Naive thymus-derived CD4-positive, alpha-beta T cell (primary cell): ENCODE measurements at regions of chr16 and their contacts with region 1.

Region 1: DNA sequence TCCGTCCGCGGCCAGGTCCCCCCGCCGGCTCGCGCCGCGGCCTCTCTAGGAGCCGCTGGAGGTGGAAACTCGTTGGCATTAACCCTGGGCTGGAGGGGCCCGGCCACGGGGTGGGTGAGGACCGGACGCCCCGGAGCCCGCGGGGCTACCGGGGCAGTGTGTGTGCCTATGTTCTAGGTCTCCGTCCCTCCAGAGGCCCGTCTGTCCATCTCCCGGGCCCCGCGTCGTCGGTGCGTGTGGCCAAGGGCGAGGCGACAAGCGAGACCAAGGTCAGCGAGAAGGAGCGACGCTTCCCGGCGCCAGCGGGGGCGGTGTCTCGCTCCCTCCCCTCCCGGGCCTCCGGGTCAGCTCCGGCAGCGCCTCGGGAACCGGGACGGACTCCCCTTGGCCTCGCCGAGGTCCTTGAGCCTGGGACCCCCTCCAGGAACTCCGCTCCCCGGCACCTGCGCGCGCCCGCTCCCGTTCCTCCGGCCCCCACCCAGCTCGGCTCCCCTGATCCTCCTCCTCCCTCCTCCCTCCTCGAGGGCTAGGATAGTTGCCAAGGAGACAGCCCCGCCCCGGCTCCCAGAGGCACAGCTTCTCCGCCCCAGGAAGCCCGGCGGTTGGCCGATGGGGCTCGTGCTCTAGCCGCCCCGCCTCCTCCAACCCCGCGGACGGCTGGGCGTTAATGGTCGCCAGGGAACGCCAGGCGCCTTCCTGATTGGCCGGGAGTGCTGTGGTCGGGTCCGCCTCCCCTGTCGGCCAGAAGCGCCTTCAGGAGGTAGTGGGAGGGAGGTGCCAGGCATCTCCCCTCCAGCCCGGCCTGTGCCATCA is 663 bp upstream of the ZNF768 start:
- DNase-seq: peak; percentile 59 to 95 (median 64)
- ATAC-seq: peak; percentile 87
- H3K4me3 ChIP-seq: peak overlapping the region; percentile 75
- H3K4me3 Mint-ChIP-seq: peak overlapping the region; percentile 78 to 92 (median 88)
- H3K27ac ChIP-seq: peak overlapping the region; percentile 76
- H3K27ac Mint-ChIP-seq: peak overlapping the region; percentile 82 to 94 (median 88)
- H3K4me1 ChIP-seq: peaks cover 0 to 10% of the 10 kb centered on the region in 2 donors
- H3K4me1 Mint-ChIP-seq: peaks cover 16 to 39% (median 32%) of the 10 kb centered on the region in 7 donors
- H3K27me3 ChIP-seq: no peaks in the 10 kb centered on the region
- H3K27me3 Mint-ChIP-seq: no peaks in the 10 kb centered on the region

Region 2: GRCh38 chr16:30370444-30371247 is 156.4 kb before region 1 on chr16 and contains the start of gene TBC1D10B:
- CTCF ChIA-PET with region 1: no interaction called
- POLR2A ChIA-PET with region 1: interaction called, 3 read pairs
- intact Hi-C with region 1: loop called in 1 of 2 experiments (anchors 2 kb)
- DNase-seq: peak; percentile 89 to 100 (median 100)
- ATAC-seq: peak; percentile 91
- H3K4me3 ChIP-seq: peak within 1 kb of the TSS; percentile 76
- H3K4me3 Mint-ChIP-seq: peak within 1 kb of the TSS; percentile 83 to 92 (median 89)
- H3K27ac ChIP-seq: peak within 1 kb of the TSS; percentile 80
- H3K27ac Mint-ChIP-seq: peak within 1 kb of the TSS; percentile 63 to 98 (median 93)
- H3K4me1 ChIP-seq: peaks cover 24 to 25% of the 10 kb centered on the region in 2 donors
- H3K4me1 Mint-ChIP-seq: peaks cover 42 to 54% (median 50%) of the 10 kb centered on the region in 7 donors
- H3K27me3 ChIP-seq: no peaks in the 10 kb centered on the region
- H3K27me3 Mint-ChIP-seq: peaks cover 0 to 3% (median 0%) of the 10 kb centered on the region in 5 donors
- total RNA-seq, gene TBC1D10B: 23.2 to 70.0 (median 45.2) TPM

Region 3: GRCh38 chr16:30378236-30379204 is 148.5 kb before region 1 on chr16:
- CTCF ChIA-PET with region 1: no interaction called
- POLR2A ChIA-PET with region 1: no interaction called
- intact Hi-C with region 1: loop called in 1 of 2 experiments (anchors 1 kb)
- DNase-seq: peak; percentile 97 to 99 (median 99)
- ATAC-seq: peak; percentile 91
- H3K4me3 ChIP-seq: peak overlapping the region; percentile 88
- H3K4me3 Mint-ChIP-seq: peak overlapping the region; percentile 90 to 100 (median 97)
- H3K27ac ChIP-seq: peak overlapping the region; percentile 100
- H3K27ac Mint-ChIP-seq: peak overlapping the region; percentile 98 to 100 (median 100)
- H3K4me1 ChIP-seq: peaks cover 54 to 56% of the 10 kb centered on the region in 2 donors
- H3K4me1 Mint-ChIP-seq: peaks cover 32 to 61% (median 49%) of the 10 kb centered on the region in 7 donors
- H3K27me3 ChIP-seq: no peaks in the 10 kb centered on the region
- H3K27me3 Mint-ChIP-seq: no peaks in the 10 kb centered on the region

Region 4: DNA sequence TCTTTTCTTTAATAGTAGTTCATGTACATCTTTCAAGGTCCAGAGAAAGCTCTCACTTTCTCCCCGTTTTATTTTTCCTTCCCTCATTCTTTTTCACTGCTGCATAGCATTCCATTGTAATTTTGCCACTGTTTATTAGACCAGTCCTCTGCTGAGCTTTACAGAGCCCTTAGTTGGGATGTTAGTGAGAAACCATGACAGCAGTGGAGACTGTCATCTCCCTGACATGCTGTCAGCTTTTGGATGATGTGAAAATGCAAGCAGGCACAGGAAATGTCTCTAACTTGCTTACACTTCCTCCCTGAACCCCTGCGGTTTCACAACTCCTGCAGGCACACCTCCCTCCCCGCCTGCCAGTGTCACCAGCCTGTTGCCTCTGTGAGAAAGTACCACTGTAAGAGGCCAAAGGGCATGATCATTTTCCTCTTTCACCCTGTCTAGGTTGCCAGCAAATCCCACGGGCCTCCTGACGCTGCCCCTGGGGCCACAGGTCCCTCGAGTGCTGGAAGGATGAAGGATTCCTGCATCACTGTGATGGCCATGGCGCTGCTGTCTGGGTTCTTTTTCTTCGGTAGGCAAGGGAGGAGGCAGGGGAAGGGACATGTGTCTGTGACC is 54.6 kb before region 1 on chr16 and contains the start of gene ITGAL:
- CTCF ChIA-PET with region 1: no interaction called
- POLR2A ChIA-PET with region 1: no interaction called
- intact Hi-C with region 1: loop called (anchors 2 kb)
- DNase-seq: peak; percentile 41 to 89 (median 84)
- ATAC-seq: peak; percentile 89
- H3K4me3 ChIP-seq: peak within 1 kb of the TSS; percentile 74
- H3K4me3 Mint-ChIP-seq: peak within 1 kb of the TSS; percentile 83 to 100 (median 98)
- H3K27ac ChIP-seq: peak within 1 kb of the TSS; percentile 84
- H3K27ac Mint-ChIP-seq: peak within 1 kb of the TSS; percentile 88 to 98 (median 96)
- H3K4me1 ChIP-seq: peaks cover 60 to 63% of the 10 kb centered on the region in 2 donors
- H3K4me1 Mint-ChIP-seq: peaks cover 43 to 83% (median 57%) of the 10 kb centered on the region in 7 donors
- H3K27me3 ChIP-seq: no peaks in the 10 kb centered on the region
- H3K27me3 Mint-ChIP-seq: no peaks in the 10 kb centered on the region
- total RNA-seq, gene ITGAL: 258 to 629 (median 436) TPM

Region 5: GRCh38 chr16:30571695-30572600 is 44.9 kb after region 1 on chr16 and contains the start of gene ZNF688:
- CTCF ChIA-PET with region 1: no interaction called
- POLR2A ChIA-PET with region 1: interaction called, 4 read pairs
- intact Hi-C with region 1: loop called (anchors 2 kb)
- DNase-seq: peak; percentile 74 to 99 (median 97)
- ATAC-seq: peak; percentile 89
- H3K4me3 ChIP-seq: peak within 1 kb of the TSS; percentile 88
- H3K4me3 Mint-ChIP-seq: peak within 1 kb of the TSS; percentile 87 to 98 (median 90)
- H3K27ac ChIP-seq: peak within 1 kb of the TSS; percentile 94
- H3K27ac Mint-ChIP-seq: peak within 1 kb of the TSS; percentile 92 to 98 (median 95)
- H3K4me1 ChIP-seq: peaks cover 36 to 38% of the 10 kb centered on the region in 2 donors
- H3K4me1 Mint-ChIP-seq: peaks cover 17 to 51% (median 39%) of the 10 kb centered on the region in 7 donors
- H3K27me3 ChIP-seq: no peaks in the 10 kb centered on the region
- H3K27me3 Mint-ChIP-seq: no peaks in the 10 kb centered on the region
- total RNA-seq, gene ZNF688: 8.8 to 24.3 (median 16.3) TPM

Region 6: DNA sequence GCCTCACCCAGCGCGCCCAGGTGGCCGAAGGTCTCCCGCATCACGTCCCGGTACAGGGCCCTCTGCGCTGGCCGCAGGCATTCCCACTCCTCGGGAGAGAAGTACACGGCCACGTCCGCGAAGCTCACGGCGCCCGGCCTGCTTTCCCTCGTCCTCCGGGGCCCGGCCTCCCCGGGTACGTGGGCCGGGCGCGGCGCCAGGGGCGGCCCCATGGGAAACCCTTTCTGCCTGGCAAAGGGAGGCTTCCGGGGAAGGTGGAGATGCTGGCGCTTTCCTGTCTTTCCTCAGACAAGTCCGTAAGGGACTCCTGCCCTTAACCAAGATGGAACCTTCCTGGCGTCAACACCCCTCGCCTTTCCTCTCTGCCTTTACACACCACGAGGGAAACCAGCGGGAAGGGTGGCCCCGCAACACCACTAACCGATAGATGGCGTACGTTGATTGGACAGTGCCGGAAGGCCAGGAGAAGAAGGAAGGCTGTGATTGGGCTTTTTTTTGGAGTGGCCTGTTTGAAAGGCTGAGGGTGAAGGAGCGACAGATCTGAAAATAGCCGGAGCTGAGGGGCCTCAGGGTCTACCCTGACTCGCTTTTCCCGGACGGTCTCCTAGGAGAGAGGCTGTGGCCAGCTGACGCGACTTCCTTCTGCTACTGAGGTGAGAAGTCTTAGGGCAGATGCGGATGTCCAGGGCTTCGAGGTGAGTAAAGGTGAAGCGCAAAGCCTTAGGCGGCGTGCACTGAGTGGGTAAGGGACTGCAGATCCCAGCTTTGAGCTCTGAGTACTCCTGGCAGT is 58.6 kb after region 1 on chr16 and contains the start of gene ZNF785:
- CTCF ChIA-PET with region 1: no interaction called
- POLR2A ChIA-PET with region 1: no interaction called
- intact Hi-C with region 1: loop called (anchors 2 kb)
- DNase-seq: peak; percentile 72 to 95 (median 93)
- ATAC-seq: peak; percentile 100
- H3K4me3 ChIP-seq: peak within 1 kb of the TSS; percentile 77
- H3K4me3 Mint-ChIP-seq: peak within 1 kb of the TSS; percentile 85 to 98 (median 94)
- H3K27ac ChIP-seq: peak within 1 kb of the TSS; percentile 81
- H3K27ac Mint-ChIP-seq: peak within 1 kb of the TSS; percentile 89 to 95 (median 92)
- H3K4me1 ChIP-seq: peaks cover 8 to 12% of the 10 kb centered on the region in 2 donors
- H3K4me1 Mint-ChIP-seq: peaks cover 6 to 44% (median 32%) of the 10 kb centered on the region in 7 donors
- H3K27me3 ChIP-seq: no peaks in the 10 kb centered on the region
- H3K27me3 Mint-ChIP-seq: peaks cover 0 to 2% (median 0%) of the 10 kb centered on the region in 5 donors
- total RNA-seq, gene ZNF785: 10.2 to 37.1 (median 21.4) TPM

Region 7: DNA sequence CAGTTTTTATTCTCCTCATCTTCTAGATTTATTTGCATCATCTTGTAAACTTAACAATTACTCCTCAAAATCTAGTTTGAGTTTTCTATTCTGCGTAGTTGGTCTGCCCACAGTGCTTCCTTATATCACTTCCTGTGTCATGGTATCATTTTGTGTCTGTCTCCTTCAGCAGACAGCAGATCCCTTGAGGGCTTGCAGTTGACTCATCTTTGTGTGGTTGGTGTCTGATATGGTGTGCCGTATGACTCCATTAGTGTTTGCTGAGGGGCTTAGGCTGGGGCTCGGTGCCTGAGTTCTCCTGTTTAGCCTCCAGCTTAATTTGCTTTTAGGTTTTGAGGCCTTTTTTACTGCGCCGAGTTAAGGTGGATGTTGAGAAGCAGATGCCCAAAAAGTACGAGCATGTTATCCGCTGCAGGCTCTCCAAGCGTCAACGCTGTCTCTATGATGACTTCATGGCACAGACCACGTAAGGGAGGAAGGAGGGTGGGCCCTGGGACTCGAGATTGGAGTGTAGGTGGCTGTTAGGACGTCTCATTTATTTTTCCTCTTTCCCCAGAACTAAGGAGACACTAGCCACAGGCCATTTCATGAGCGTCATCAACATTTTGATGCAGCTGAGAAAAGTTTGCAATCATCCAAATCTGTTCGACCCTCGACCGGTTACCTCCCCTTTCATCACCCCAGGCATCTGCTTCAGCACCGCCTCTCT is 188.9 kb after region 1 on chr16:
- CTCF ChIA-PET with region 1: no interaction called
- POLR2A ChIA-PET with region 1: no interaction called
- intact Hi-C with region 1: no loop called
- DNase-seq: peak in 4 of 9 donors; percentile 12 to 57 (median 28)
- ATAC-seq: peak; percentile 93
- H3K4me3 ChIP-seq: no peak overlapping the region
- H3K4me3 Mint-ChIP-seq: peak overlapping the region; percentile 6 to 85 (median 58)
- H3K27ac ChIP-seq: peak overlapping the region; percentile 27
- H3K27ac Mint-ChIP-seq: peak overlapping the region; percentile 78 to 96 (median 91)
- H3K4me1 ChIP-seq: peaks cover 0 to 16% of the 10 kb centered on the region in 2 donors
- H3K4me1 Mint-ChIP-seq: peaks cover 20 to 39% (median 32%) of the 10 kb centered on the region in 7 donors
- H3K27me3 ChIP-seq: no peaks in the 10 kb centered on the region
- H3K27me3 Mint-ChIP-seq: no peaks in the 10 kb centered on the region

Region 8: DNA sequence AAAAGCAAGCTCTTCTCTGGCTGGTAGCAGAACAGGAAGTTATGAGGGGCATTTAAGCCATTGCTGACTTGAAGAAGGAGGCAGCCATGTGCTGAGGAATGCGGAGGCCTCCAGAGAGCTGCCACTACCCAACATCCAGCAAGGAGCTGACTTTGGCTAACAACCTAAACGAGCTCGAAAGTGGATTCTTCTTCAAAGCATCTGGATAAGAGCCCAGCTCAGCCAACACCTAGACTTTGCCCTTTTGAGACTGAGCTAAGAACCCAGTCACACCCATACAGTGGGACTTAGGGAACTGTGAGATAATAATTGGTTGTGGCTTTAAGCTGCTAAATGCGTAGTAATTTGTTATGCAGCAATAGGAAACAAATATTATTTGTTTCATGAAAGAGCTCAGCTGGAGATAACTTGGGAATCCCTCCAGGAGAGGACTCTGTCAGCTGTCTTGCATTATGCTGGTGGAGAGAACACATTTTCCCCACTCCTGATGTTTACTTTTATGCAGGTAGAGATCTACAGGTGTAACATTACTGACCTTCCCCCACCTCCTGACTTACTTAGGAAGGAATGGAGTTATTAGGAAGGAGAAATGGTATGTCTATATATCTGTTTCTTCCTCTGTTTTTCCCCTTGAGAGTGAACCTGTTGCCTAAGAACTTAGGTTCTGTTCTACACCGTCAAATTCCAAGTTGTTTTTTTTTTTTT is 312.6 kb after region 1 on chr16:
- CTCF ChIA-PET with region 1: no interaction called
- POLR2A ChIA-PET with region 1: no interaction called
- intact Hi-C with region 1: no loop called
- DNase-seq: no peak
- ATAC-seq: no peak
- H3K4me3 ChIP-seq: no peak overlapping the region
- H3K4me3 Mint-ChIP-seq: no peak overlapping the region
- H3K27ac ChIP-seq: no peak overlapping the region
- H3K27ac Mint-ChIP-seq: no peak overlapping the region
- H3K4me1 ChIP-seq: no peaks in the 10 kb centered on the region
- H3K4me1 Mint-ChIP-seq: peaks cover 0 to 3% (median 2%) of the 10 kb centered on the region in 7 donors
- H3K27me3 ChIP-seq: no peaks in the 10 kb centered on the region
- H3K27me3 Mint-ChIP-seq: no peaks in the 10 kb centered on the region